AG04450 (cell line): ENCODE measurements at regions of chr10 and their contacts with region 1.

Region 1: GRCh38 chr10:3095373-3096139 is 28.2 kb downstream of the PFKP start:
- DNase-seq: peak; percentile 96
- H3K4me3 ChIP-seq: peak overlapping the region; percentile 41
- H3K27ac ChIP-seq: peak overlapping the region; percentile 96
- H3K27me3 ChIP-seq: no peaks in the 10 kb centered on the region
- CTCF ChIP-seq: no peak

Region 2: DNA sequence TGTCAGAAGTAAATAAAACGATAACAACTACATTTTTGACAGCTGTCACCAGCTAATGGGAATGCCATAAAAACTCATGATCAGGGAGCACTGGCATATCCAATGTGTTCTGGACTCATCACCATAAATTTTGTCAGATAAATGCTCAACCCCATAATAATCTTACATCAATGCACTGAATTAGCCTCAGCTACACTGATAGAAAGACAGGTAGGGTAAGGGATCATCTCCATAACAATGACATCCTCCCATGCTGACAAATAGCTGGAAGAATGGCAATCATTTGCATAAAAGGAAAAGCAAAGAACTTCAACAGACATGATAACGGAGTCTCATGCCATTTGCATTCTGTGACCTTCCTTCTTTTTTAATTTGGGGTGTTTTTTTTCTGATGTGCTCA is 381.0 kb before region 1 on chr10:
- CTCF ChIA-PET with region 1: no interaction called
- POLR2A ChIA-PET with region 1: no interaction called
- DNase-seq: no peak
- H3K4me3 ChIP-seq: no peak overlapping the region
- H3K27ac ChIP-seq: no peak overlapping the region
- H3K27me3 ChIP-seq: no peaks in the 10 kb centered on the region
- CTCF ChIP-seq: no peak

Region 3: DNA sequence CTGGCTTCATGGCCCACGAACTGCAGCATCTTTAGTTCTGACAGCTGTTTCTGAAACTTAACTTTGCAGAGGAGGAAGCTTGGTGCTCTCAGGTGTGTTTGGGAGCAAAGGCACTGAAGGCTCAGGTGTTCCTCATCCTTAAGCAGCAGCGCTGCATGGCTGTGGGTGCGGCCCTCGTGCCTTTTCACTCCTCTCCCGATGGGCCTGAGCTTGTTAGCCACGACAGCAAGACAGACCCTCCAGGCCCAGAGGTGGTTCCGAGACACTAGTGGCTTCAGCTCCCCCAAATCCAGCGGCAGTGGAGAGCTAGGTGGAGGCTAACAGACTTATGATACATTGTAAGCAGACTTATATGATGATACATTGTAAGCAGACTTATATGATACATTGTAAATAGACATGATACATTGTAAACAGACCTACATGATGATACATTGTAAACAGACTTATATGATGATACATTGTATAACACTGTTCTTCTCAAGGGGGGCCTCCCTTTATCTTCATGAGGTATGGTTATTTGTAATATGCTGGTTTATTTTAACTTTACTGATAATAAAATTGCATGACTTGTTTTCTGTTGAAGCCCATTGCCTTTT is 14.1 kb before region 1 on chr10:
- CTCF ChIA-PET with region 1: interaction called, 3 read pairs
- POLR2A ChIA-PET with region 1: interaction called, 12 read pairs
- DNase-seq: no peak
- H3K4me3 ChIP-seq: no peak overlapping the region
- H3K27ac ChIP-seq: no peak overlapping the region
- H3K27me3 ChIP-seq: no peaks in the 10 kb centered on the region
- CTCF ChIP-seq: no peak

Region 4: GRCh38 chr10:3107426-3107961 is 11.9 kb after region 1 on chr10:
- CTCF ChIA-PET with region 1: no interaction called
- POLR2A ChIA-PET with region 1: interaction called, 33 read pairs
- DNase-seq: peak; percentile 92
- H3K4me3 ChIP-seq: no peak overlapping the region
- H3K27ac ChIP-seq: peak overlapping the region; percentile 94
- H3K27me3 ChIP-seq: no peaks in the 10 kb centered on the region
- CTCF ChIP-seq: no peak